PC-3 (cell line): ENCODE measurements at regions of chr10 and their contacts with region 1.

Region 1: GRCh38 chr10:112811740-112812551 is 138.1 kb upstream of the TCF7L2 start:
- DNase-seq: peak; percentile 96
- ATAC-seq: peak; percentile 85
- H3K4me3 ChIP-seq: no peak overlapping the region
- H3K27ac ChIP-seq: peak overlapping the region; percentile 78
- H3K4me1 ChIP-seq: peaks cover 41% of the 10 kb centered on the region
- H3K27me3 ChIP-seq: no peaks in the 10 kb centered on the region
- CTCF ChIP-seq: no peak

Region 2: DNA sequence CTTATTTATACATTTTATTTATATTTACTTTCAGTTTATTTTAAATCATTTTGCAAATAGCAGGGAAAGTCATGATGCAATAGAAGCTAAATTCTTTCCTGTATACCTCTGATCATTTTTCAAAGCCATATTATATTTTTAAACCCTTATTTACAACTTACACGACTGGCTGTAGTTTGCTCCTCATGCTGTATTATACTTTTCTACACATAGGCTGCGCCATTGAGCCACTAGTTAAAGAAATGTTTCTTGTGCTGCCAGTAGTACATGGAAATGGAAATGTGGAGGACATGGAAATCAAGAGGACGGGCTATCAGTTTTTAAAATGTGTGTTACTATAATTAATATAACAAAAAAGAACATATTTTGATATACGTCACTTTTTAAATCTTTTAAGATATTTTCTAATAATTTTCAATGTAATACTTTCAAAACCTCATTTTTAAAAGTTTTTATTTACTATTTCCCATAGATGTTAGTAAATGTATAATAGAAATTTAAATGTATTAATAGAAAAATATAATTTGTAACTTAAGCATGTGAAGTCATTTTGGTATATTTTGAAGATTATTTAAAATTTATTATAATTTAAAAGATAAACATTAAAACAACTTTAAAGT is 246.4 kb before region 1 on chr10:
- CTCF ChIA-PET with region 1: no interaction called
- POLR2A ChIA-PET with region 1: no interaction called
- intact Hi-C with region 1: loop called (anchors 5 kb)
- DNase-seq: peak; percentile 83
- ATAC-seq: peak; percentile 54
- H3K4me3 ChIP-seq: no peak overlapping the region
- H3K27ac ChIP-seq: no peak overlapping the region
- H3K4me1 ChIP-seq: peaks cover 21% of the 10 kb centered on the region
- H3K27me3 ChIP-seq: no peaks in the 10 kb centered on the region
- CTCF ChIP-seq: peak; percentile 65

Region 3: GRCh38 chr10:112721080-112721698 is 90.8 kb before region 1 on chr10:
- CTCF ChIA-PET with region 1: no interaction called
- POLR2A ChIA-PET with region 1: no interaction called
- intact Hi-C with region 1: loop called (anchors 1 kb)
- DNase-seq: peak; percentile 69
- ATAC-seq: peak; percentile 37; the same call in 1 of the 2 replicates
- H3K4me3 ChIP-seq: no peak overlapping the region
- H3K27ac ChIP-seq: no peak overlapping the region
- H3K4me1 ChIP-seq: peaks cover 18% of the 10 kb centered on the region
- H3K27me3 ChIP-seq: no peaks in the 10 kb centered on the region
- CTCF ChIP-seq: peak; percentile 69

Region 4: GRCh38 chr10:112767156-112767555 is 44.8 kb before region 1 on chr10:
- CTCF ChIA-PET with region 1: no interaction called
- POLR2A ChIA-PET with region 1: no interaction called
- intact Hi-C with region 1: loop called (anchors 2 kb)
- DNase-seq: peak; percentile 68
- ATAC-seq: peak; percentile 37; the same call in 1 of the 2 replicates
- H3K4me3 ChIP-seq: peak overlapping the region; percentile 50; the same call in 1 of the 2 replicates
- H3K27ac ChIP-seq: peak overlapping the region; percentile 89
- H3K4me1 ChIP-seq: peaks cover 53% of the 10 kb centered on the region
- H3K27me3 ChIP-seq: no peaks in the 10 kb centered on the region
- CTCF ChIP-seq: no peak

Region 5: GRCh38 chr10:112915590-112916572 is 103.9 kb after region 1 on chr10:
- CTCF ChIA-PET with region 1: no interaction called
- POLR2A ChIA-PET with region 1: no interaction called
- intact Hi-C with region 1: loop called (anchors 1 kb)
- DNase-seq: peak; percentile 85
- ATAC-seq: peak; percentile 76
- H3K4me3 ChIP-seq: peak overlapping the region; percentile 57
- H3K27ac ChIP-seq: peak overlapping the region; percentile 93
- H3K4me1 ChIP-seq: peaks cover 56% of the 10 kb centered on the region
- H3K27me3 ChIP-seq: no peaks in the 10 kb centered on the region
- CTCF ChIP-seq: no peak

Region 6: DNA sequence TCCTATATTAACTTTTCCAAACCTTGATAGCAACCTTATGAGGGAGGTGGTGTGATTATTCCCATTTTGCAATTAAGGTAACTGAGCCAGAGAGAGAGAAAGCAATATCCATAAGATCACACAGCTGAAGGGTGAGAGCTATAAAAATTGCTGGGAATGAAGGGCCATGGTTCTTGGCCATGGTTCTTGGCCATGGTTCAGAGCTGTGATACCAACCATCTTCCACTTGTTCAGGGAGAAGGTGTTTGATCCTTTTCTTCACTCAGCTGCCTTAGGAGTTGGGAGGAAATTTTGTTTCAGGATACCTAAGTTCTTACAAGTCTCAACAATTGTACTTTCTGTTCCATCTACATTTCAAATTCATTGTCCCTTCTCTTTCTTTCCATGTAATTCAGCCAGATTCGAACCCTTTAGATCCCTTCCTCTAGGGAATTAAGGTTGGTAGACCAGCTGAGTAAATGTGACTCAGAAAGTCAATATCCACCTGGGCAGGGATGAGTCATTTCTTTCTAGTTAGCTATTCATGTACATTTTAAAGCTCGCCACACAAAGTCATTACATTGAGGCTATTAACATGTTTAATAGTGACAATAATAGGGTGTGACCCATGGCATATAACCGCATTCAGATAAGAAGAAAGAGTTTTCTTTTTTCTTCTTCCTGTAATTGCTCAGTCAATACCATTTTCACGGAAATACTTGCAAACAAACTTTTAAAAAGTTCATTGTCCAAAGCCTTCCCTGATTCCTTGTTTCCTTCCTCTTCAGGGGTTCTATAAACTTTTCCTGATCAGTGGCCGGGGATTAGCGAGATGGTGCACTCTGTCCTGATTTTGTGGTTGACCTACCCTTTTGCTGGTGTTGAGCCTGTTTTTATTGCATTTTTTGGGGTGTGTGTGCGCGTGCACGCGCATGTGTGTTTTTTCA is 281.5 kb after region 1 on chr10:
- CTCF ChIA-PET with region 1: no interaction called
- POLR2A ChIA-PET with region 1: no interaction called
- intact Hi-C with region 1: loop called (anchors 5 kb)
- DNase-seq: peak; percentile 93
- ATAC-seq: peak; percentile 74
- H3K4me3 ChIP-seq: peak overlapping the region; percentile 46
- H3K27ac ChIP-seq: peak overlapping the region; percentile 98
- H3K4me1 ChIP-seq: peaks cover 46% of the 10 kb centered on the region
- H3K27me3 ChIP-seq: no peaks in the 10 kb centered on the region
- CTCF ChIP-seq: no peak